HEK293 (cell line): ENCODE measurements at regions of chr15 and their contacts with region 1.

Region 1: DNA sequence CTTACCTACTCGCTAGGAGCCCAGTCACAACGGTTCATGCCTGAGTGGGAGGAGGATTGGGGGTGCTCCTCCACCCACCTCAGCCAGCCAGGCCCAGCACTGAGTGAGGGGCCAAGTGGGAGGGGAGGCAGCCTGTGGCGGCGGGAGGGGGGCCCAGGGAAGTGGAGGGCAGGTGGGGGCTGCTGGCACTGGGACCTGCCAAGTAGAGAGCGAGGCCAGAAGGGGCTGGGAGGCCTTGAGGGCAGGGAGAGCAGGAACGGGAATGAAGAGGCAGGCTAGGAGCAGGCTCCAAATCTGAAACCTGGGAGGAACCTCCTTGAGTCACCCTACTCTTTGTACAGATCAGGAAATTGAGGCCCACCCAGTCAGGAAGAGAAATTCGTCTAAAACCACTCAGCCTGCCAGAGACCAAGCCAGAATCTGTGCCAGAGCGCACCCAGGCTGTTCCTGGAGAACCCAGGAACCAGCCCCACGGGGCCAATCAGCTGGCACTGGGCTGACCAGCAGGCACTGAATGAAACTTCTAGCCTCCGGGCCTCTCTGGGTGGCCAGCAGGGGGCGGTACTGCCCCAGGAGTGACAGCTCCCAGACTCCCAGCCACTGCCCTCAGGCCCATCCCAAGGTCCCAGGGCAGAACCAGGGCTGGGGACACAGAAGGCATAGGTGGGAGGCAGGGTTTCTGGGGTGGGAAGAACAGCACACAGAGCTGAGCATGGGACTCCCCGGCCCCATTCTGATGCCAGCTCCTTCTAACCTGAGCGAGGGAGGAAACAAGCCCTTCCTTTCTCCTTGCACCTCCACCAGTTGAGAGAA is 14.8 kb upstream of the CYP11A1 start:
- H3K4me3 ChIP-seq: no peak overlapping the region
- H3K27ac ChIP-seq: no peak overlapping the region
- H3K4me1 ChIP-seq: no peaks in the 10 kb centered on the region
- CTCF ChIP-seq: peak; percentile 95

Region 2: DNA sequence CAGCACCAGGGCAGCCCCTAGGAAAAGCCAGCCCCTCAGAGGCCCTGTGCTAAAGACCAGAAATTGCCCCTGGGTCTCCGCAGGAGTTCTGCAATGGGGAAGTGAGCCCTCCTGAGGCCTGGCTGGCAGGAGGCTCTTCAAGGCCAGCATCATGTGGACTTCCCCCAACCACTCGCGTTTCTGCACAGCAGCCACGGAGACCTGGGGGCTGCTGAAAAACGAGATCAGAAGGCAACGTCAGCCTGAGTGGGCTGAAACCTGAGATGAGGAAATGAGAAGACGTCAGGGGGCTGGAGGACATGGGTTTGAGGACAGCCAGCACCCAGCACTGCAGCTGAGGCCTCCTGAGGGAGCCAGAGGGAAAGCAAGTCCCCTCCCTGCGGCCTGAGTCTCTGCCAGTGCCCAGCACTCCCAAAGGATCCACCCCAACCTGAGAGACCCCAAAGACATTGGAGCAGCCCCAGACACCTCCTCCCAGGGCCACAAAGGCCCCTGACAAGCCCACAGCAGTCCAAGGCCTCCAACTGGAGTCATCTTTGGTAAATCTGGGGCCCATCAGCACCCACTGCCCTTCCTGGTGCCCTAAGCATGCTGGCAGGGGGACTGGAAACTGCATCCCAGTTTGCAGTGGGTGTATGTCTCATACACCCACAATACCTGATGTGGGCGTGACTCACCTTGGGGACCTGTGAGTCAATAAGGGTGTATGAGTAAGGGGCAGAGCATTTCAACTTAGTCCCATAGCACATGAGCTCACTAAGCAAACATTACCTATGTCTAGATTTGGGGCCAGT is 14.4 kb after region 1 on chr15:
- CTCF ChIA-PET with region 1: interaction called, 20 read pairs
- POLR2A ChIA-PET with region 1: no interaction called
- H3K4me3 ChIP-seq: no peak overlapping the region
- H3K27ac ChIP-seq: no peak overlapping the region
- H3K4me1 ChIP-seq: no peaks in the 10 kb centered on the region
- CTCF ChIP-seq: no peak

Region 3: DNA sequence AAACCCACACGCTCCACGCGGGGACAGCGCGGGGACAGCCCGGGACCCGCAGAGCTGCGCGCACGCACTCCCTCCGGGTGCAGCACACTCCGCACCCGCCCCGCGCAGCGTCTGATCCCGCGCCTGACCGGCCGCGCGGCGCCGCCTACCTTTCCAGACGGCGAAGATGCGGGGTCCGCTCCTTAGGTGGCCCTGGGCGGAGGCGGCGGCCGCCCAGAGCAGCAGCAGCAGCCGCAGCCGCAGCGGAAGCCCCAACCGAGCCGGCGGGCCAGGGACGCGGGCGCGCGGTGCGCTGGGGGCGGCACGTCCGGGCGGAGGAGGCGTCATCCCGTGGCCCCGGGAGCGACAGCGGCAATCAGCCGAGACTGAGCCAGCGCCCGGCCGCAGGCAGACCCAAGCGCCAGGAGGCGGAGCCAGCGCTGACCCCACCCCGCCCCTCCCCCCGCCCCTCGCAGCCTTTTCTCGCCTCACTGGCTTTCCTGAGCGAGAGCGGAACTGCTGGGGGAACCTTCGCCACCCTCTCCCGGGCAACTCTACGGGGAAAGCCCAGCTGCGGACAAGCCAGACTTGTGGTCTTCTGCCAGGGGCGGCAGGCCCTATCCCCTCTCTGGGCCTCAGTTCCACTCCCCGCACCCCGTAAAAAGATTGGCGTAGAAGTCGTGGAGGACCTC is 51.5 kb after region 1 on chr15 and contains the start of gene SEMA7A:
- CTCF ChIA-PET with region 1: interaction called, 768 read pairs
- POLR2A ChIA-PET with region 1: interaction called, 11 read pairs
- H3K4me3 ChIP-seq: peak within 1 kb of the TSS; percentile 57
- H3K27ac ChIP-seq: no peak within 1 kb of the TSS
- H3K4me1 ChIP-seq: peaks cover 4% of the 10 kb centered on the region
- CTCF ChIP-seq: no peak; the same call in 1 of the 2 replicates

Region 4: GRCh38 chr15:74482661-74483060 is 100.5 kb after region 1 on chr15:
- CTCF ChIA-PET with region 1: interaction called, 11 read pairs
- POLR2A ChIA-PET with region 1: no interaction called
- H3K4me3 ChIP-seq: no peak overlapping the region
- H3K27ac ChIP-seq: no peak overlapping the region
- H3K4me1 ChIP-seq: no peaks in the 10 kb centered on the region
- CTCF ChIP-seq: no peak

Region 5: DNA sequence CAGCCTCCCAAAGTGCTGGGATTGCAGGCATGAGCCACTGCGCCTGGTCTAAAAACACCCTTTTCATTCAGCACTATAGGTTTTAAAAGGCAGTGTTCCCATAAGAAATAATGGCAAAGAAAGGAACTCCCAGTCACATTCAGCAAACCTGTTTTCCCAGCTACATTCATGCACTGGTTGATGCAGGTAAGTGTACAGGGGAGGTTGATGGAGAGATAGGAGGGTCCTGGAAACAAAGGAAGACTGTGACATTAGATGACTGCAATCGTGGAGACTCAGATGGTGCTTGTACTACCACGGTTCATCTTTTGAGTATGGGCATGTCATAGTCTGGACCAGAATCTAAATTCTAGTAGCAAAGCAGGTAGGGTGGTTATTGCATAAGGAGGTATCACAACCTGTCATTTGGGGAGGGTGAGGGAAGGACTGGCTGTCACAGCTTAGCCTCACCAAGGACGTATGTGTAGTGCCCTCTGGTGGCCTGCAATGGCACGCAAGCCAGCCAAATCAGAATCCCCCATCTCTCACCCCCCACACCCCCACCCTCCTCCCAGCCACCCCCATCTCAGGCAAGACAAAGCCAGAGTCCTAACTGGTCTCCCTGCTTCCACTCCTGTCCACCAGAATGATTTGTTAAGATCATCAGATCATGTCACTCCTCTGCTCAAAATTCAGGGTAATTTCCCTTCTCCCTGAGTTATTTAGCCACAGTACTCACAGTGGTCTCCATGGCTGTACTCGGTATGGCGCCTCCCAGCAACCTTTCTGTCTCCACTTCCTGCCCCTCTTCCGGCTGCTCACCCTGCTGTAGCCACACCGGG is 107.5 kb after region 1 on chr15:
- CTCF ChIA-PET with region 1: interaction called, 10 read pairs
- POLR2A ChIA-PET with region 1: no interaction called
- H3K4me3 ChIP-seq: no peak overlapping the region
- H3K27ac ChIP-seq: no peak overlapping the region; the same call in 1 of the 2 replicates
- H3K4me1 ChIP-seq: peaks cover 3% of the 10 kb centered on the region; the same call in 1 of the 2 replicates
- CTCF ChIP-seq: peak; percentile 70